Activated naive CD4-positive, alpha-beta T cell treated with anti-CD3 and anti-CD28 coated beads for 36 hours (primary cell): ENCODE measurements at regions of chr18 and their contacts with region 1.

Region 1: GRCh38 chr18:75209129-75209950 is at the start of gene PTGR3:
- DNase-seq: peak; percentile 92
- H3K4me3 Mint-ChIP-seq: peak within 1 kb of the TSS; percentile 97
- H3K27ac Mint-ChIP-seq: peak within 1 kb of the TSS; percentile 98
- H3K4me1 Mint-ChIP-seq: peaks cover 51% of the 10 kb centered on the region
- H3K27me3 Mint-ChIP-seq: peaks cover 12% of the 10 kb centered on the region
- total RNA-seq, gene PTGR3: 28.4 to 33.0 TPM

Region 2: GRCh38 chr18:74291771-74292540 is 917.4 kb before region 1 on chr18 and contains the start of gene CYB5A:
- CTCF ChIA-PET with region 1: no interaction called
- intact Hi-C with region 1: loop called (anchors 5 kb)
- DNase-seq: peak; percentile 99
- H3K4me3 Mint-ChIP-seq: no peak within 1 kb of the TSS
- H3K27ac Mint-ChIP-seq: peak within 1 kb of the TSS; percentile 59
- H3K4me1 Mint-ChIP-seq: peaks cover 20% of the 10 kb centered on the region
- H3K27me3 Mint-ChIP-seq: no peaks in the 10 kb centered on the region
- total RNA-seq, gene CYB5A: 77.8 to 78.3 TPM

Region 3: DNA sequence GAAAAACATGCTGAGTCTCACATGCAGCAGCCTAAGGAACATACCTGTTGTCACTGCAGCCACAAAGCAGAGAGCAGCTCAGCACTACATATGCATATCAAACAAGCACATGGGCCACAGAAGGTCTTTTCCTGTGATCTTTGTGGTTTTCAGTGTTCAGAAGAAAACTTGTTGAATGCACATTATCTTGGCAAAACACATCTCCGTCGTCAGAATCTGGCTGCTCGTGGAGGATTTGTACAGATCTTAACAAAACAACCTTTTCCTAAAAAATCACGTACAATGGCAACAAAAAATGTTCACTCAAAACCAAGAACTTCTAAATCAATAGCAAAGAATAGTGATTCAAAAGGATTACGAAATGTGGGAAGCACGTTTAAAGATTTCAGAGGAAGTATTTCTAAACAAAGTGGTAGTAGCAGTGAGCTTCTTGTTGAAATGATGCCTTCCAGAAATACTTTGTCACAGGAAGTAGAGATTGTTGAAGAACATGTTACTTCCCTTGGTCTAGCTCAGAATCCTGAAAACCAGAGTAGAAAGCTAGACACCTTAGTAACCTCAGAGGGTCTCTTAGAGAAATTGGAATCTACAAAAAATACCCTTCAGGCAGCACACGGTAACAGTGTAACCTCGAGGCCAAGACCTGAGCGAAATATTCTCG is 577.6 kb before region 1 on chr18:
- CTCF ChIA-PET with region 1: no interaction called
- intact Hi-C with region 1: loop called (anchors 2 kb)
- DNase-seq: peak; percentile 31
- H3K4me3 Mint-ChIP-seq: peak overlapping the region; percentile 64
- H3K27ac Mint-ChIP-seq: peak overlapping the region; percentile 89
- H3K4me1 Mint-ChIP-seq: peaks cover 46% of the 10 kb centered on the region
- H3K27me3 Mint-ChIP-seq: no peaks in the 10 kb centered on the region

Region 4: DNA sequence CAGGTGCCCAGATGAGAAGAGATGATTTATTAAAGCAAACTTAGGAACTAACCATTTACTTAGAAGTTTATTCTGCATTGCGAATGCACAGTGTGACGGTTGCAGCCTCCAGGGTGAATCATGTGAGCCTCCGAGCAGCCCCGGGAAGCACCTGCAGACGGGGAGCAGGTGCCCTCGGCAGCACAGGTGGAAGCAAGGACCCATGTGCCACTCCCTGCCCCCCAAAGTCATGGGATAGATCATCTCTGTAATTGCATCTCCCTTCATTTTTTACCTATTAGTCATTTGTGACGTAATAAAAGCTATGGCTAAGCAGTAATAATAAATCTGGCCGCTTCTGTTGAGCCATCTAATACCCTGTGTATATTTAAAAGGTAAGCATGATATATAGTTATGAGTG is 97.6 kb before region 1 on chr18:
- CTCF ChIA-PET with region 1: no interaction called
- intact Hi-C with region 1: no loop called
- DNase-seq: no peak
- H3K4me3 Mint-ChIP-seq: no peak overlapping the region
- H3K27ac Mint-ChIP-seq: no peak overlapping the region
- H3K4me1 Mint-ChIP-seq: peaks cover 3% of the 10 kb centered on the region
- H3K27me3 Mint-ChIP-seq: no peaks in the 10 kb centered on the region

Region 5: GRCh38 chr18:75226286-75226955 is 17.1 kb after region 1 on chr18:
- CTCF ChIA-PET with region 1: interaction called, 3 read pairs
- intact Hi-C with region 1: loop called (anchors 2 kb)
- DNase-seq: peak; percentile 65
- H3K4me3 Mint-ChIP-seq: peak overlapping the region; percentile 64
- H3K27ac Mint-ChIP-seq: peak overlapping the region; percentile 68
- H3K4me1 Mint-ChIP-seq: peaks cover 75% of the 10 kb centered on the region
- H3K27me3 Mint-ChIP-seq: no peaks in the 10 kb centered on the region

Region 6: DNA sequence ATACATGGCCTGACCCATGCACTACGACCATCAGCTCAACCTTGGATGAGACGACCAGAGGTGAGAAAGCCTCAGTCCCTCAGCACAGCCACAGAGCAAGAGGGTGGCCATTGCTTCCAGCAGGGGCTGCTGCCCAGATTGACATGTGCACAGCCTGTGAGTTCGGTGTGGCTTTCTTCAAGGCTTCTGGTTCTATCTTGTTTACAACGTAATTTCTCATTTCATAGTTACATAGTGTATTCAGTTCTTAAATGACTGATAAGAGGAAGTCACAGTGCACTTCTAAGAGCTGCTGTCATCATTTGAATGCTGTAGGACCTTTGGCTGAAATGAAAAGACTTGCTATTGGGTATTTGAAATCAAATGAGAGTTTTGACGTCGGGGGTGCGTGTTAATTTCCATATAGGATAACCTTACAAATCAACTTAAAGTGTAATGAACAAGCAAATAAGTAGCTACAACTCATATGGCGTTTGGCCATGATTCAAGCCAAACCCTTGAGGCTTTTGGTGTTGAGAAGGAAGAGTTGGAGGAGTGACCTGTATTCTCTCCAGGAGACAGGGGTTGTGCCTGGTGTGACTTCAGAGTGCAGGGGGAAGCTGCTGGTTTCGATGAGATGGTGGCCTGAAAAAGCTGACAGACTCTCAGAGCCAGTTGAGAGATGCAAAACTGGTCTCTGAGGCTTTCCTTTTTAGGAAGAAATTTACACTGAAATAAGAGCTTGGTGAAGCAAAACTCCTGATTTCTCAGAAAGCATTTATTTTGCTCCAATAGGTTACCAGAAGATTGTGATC is 52.3 kb after region 1 on chr18:
- CTCF ChIA-PET with region 1: no interaction called
- intact Hi-C with region 1: no loop called
- DNase-seq: peak; percentile 23
- H3K4me3 Mint-ChIP-seq: no peak overlapping the region
- H3K27ac Mint-ChIP-seq: peak overlapping the region; percentile 63
- H3K4me1 Mint-ChIP-seq: peaks cover 46% of the 10 kb centered on the region
- H3K27me3 Mint-ChIP-seq: no peaks in the 10 kb centered on the region

Region 7: DNA sequence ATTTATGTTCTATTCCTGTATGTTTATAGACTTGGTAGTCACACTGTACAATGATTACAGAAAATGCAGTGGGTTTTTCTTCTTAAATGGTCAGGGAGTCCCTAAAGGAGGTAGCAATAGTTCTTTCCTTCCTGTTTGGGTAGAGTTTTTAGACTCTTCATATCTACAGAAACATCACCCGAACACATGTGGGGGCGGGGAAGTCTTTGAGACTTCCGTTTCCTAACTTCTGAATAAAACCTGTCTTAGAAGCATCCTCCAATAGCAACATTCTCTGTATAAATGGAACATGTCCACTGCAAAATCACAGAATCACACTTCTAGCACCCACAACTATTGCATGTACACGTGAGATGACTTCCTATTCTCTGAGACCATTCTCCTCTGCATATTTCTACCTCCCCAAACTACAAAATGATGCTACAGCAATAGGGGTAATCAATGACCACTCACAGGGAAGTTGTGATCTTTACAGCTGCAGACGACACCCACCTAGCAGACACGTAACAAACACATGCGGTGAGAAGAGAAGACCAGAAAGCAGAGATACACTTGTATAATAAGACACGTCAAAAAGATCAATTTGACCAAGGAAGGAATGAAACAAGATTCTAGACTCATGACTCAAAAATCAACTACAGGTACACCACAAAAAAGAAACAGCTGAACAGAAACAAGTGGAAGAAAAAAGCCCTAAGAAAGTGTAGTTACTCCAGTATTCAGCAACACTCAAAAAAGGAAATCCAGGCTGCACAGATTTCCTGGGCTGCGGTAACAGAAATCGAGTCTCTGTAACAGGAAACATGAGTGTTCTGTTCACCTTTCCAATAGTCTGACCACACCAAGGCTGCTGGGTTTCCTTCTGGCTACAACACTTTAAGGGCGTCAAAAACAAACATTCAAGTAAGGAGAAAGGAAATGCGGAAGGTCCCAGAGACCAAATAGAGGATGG is 1165.3 kb after region 1 on chr18:
- CTCF ChIA-PET with region 1: no interaction called
- intact Hi-C with region 1: loop called (anchors 2 kb)
- DNase-seq: peak; percentile 80
- H3K4me3 Mint-ChIP-seq: no peak overlapping the region
- H3K27ac Mint-ChIP-seq: peak overlapping the region; percentile 74
- H3K4me1 Mint-ChIP-seq: peaks cover 46% of the 10 kb centered on the region
- H3K27me3 Mint-ChIP-seq: peaks cover 2% of the 10 kb centered on the region

Region 8: GRCh38 chr18:77207540-77207939 is 1998.2 kb after region 1 on chr18:
- CTCF ChIA-PET with region 1: no interaction called
- intact Hi-C with region 1: loop called (anchors 10 kb)
- DNase-seq: peak; percentile 74
- H3K4me3 Mint-ChIP-seq: no peak overlapping the region
- H3K27ac Mint-ChIP-seq: peak overlapping the region; percentile 71
- H3K4me1 Mint-ChIP-seq: peaks cover 32% of the 10 kb centered on the region
- H3K27me3 Mint-ChIP-seq: no peaks in the 10 kb centered on the region